Endothelial cell of umbilical vein (primary cell): ENCODE measurements at regions of chr6 and their contacts with region 1.

Region 1: DNA sequence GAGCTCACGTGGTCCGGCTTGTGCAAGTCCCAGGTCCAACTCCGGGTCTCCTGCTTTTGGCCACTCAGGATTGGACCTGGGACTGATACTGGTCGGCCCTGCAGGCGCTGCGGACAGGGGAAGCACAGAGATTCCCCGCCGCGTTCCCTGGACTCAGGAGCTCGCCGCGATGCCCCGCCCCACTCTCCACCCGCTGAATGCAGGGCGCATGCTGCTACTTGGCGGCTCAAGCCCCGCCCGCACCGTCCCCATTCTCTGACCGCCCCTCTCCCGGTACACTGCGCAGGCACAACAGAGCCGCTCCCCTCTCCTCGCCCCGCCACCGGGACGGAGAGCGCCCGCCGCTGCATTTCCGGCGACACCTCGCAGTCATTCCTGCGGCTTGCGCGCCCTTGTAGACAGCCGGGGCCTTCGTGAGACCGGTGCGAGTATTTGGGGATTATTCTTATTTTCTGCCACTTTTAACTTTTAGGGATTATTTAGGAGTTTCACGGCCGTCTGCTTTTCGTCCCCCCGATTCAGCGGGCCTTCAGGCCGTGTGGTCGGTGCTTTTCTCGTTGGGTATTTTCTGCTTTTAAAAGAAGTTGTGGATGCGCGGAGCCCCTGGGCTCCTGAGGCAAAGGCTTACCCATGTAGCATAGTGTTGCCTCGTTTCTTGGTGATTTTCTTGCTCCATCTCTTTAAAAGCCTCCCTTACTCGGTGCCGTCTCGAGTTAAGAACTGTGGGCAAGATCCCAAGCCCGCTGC is at the start of gene TMEM14C:
- DNase-seq: peak; percentile 98
- H3K4me3 ChIP-seq: peak within 1 kb of the TSS; percentile 59 to 79 (median 76)
- H3K27ac ChIP-seq: peak within 1 kb of the TSS; percentile 83
- H3K4me1 ChIP-seq: peaks cover 10% of the 10 kb centered on the region
- H3K27me3 ChIP-seq: no peaks in the 10 kb centered on the region
- CTCF ChIP-seq: no peak
- POLR2A ChIP-seq: peak; percentile 88
- total RNA-seq, gene TMEM14C: 68.0 and 89.3 TPM in 2 replicates

Region 2: GRCh38 chr6:10733863-10734262 is 10.9 kb after region 1 on chr6:
- CTCF ChIA-PET with region 1: interaction called, 3 read pairs
- POLR2A ChIA-PET with region 1: interaction called, 6 read pairs
- dilution Hi-C with region 1: no loop called
- intact Hi-C with region 1: loop called (anchors 1 kb)
- DNase-seq: no peak
- H3K4me3 ChIP-seq: no peak overlapping the region
- H3K27ac ChIP-seq: peak overlapping the region; percentile 2
- H3K4me1 ChIP-seq: peaks cover 6% of the 10 kb centered on the region
- H3K27me3 ChIP-seq: no peaks in the 10 kb centered on the region
- CTCF ChIP-seq: no peak
- POLR2A ChIP-seq: no peak

Region 3: GRCh38 chr6:10747251-10747972 is 24.4 kb after region 1 on chr6 and contains the start of gene TMEM14B:
- CTCF ChIA-PET with region 1: interaction called, 4 read pairs
- POLR2A ChIA-PET with region 1: interaction called, 4 read pairs
- dilution Hi-C with region 1: no loop called
- intact Hi-C with region 1: loop called (anchors 1 kb)
- DNase-seq: peak; percentile 97
- H3K4me3 ChIP-seq: peak within 1 kb of the TSS; percentile 59 to 94 (median 91)
- H3K27ac ChIP-seq: peak within 1 kb of the TSS; percentile 81
- H3K4me1 ChIP-seq: peaks cover 16% of the 10 kb centered on the region
- H3K27me3 ChIP-seq: no peaks in the 10 kb centered on the region
- CTCF ChIP-seq: no peak
- POLR2A ChIP-seq: peak; percentile 94
- total RNA-seq, gene TMEM14B: 54.6 and 58.2 TPM in 2 replicates

Region 4: GRCh38 chr6:10800829-10801535 is 78.0 kb after region 1 on chr6:
- CTCF ChIA-PET with region 1: interaction called, 3 read pairs
- POLR2A ChIA-PET with region 1: no interaction called
- dilution Hi-C with region 1: no loop called
- intact Hi-C with region 1: loop called (anchors 2 kb)
- DNase-seq: peak; percentile 64
- H3K4me3 ChIP-seq: no peak overlapping the region
- H3K27ac ChIP-seq: no peak overlapping the region
- H3K4me1 ChIP-seq: peaks cover 2% of the 10 kb centered on the region
- H3K27me3 ChIP-seq: no peaks in the 10 kb centered on the region
- CTCF ChIP-seq: peak; percentile 94 to 99
- POLR2A ChIP-seq: no peak

Region 5: DNA sequence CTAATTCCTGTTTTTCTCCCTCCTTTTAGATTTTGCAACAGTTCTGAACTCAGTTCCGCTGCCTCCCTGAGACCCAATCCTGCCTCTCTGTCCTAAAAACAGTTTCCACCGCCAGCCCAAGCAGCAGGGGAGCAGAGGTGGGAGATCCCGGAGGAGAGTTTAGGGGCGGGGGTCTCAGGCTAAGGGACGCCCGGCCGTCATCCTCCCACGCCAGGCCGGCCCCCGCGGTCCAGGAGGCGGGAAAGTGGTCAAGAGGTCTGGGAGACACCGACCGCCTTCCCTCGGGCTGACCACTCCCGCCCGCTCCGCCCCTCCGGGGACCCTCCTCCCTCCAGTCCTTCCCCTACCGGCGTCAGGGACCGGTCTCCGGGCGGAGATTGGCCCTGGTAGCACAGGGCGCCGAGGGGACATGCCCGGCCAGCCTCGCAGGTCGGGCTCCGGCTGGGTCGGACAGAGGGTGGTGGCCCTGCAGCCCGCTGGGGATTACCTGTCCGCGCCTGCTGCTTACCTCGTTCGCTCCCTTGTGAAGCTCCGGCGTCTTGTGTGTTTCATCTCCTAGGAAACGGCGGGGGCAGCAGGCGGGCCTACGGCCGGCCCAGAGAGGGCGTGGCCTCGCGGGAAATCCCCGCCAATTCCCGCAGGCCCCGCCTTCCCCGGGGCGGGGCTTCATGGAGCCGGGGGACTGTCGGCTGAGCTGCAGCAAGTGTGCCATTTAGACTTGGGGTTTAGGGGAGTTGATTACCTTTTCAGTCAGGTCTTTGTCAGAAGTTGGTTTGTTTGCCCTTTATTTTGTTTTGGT is 115.2 kb after region 1 on chr6 and contains the start of gene MAK:
- CTCF ChIA-PET with region 1: no interaction called
- POLR2A ChIA-PET with region 1: no interaction called
- dilution Hi-C with region 1: no loop called
- intact Hi-C with region 1: no loop called
- DNase-seq: peak; percentile 90
- H3K4me3 ChIP-seq: peak within 1 kb of the TSS; percentile 27 to 56 (median 43)
- H3K27ac ChIP-seq: no peak within 1 kb of the TSS
- H3K4me1 ChIP-seq: peaks cover 8% of the 10 kb centered on the region
- H3K27me3 ChIP-seq: peaks cover 34 to 35% of the 10 kb centered on the region in 2 experiments
- CTCF ChIP-seq: no peak
- POLR2A ChIP-seq: no peak
- total RNA-seq, gene MAK: not detected in 2 replicates

Region 6: GRCh38 chr6:10954590-10955010 is 231.6 kb after region 1 on chr6:
- CTCF ChIA-PET with region 1: no interaction called
- POLR2A ChIA-PET with region 1: no interaction called
- dilution Hi-C with region 1: no loop called
- intact Hi-C with region 1: no loop called
- DNase-seq: peak; percentile 73
- H3K4me3 ChIP-seq: no peak overlapping the region
- H3K27ac ChIP-seq: no peak overlapping the region
- H3K4me1 ChIP-seq: no peaks in the 10 kb centered on the region
- H3K27me3 ChIP-seq: peaks cover 0 to 2% of the 10 kb centered on the region in 2 experiments
- CTCF ChIP-seq: peak; percentile 91 to 96
- POLR2A ChIP-seq: no peak